ENCODE measurements at regions of chr3 and their contacts with region 1.

Region 1: DNA sequence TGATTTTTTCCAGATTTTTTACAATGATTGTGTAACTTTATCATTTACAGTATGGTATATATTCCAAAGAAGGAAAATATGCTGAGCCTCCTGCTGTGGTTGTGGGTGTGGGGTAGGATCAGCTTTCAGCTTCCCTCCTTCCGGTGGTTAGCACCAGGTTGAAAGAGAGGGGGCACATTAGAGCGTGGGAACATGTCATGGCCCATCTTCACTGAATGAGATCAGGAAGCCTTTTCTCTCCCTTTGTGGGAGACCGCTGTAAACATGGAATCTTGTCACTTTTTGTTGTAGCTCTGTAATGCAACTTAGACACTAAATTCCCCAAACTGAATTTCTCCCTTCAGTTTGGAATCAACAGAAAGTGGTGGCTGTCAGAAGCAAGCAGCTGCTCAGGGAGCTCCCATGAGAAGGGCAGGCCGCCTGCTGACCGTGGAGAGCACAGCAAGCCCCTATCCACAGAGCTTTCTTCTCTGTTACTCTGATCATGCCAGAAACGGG is 86.7 kb upstream of the LIMD1 start:
- DNase-seq: no peak
- ATAC-seq: no peak
- H3K4me3 ChIP-seq: no peak overlapping the region
- H3K27ac ChIP-seq: no peak overlapping the region
- H3K4me1 ChIP-seq: no peaks in the 10 kb centered on the region
- H3K27me3 ChIP-seq: no peaks in the 10 kb centered on the region
- CTCF ChIP-seq: no peak
- EP300 ChIP-seq: no peak
- POLR2A ChIP-seq: no peak
- RAD21 ChIP-seq: no peak

Region 2: GRCh38 chr3:44899683-44900367 is 608.0 kb before region 1 on chr3:
- CTCF ChIA-PET with region 1: no interaction called
- POLR2A ChIA-PET with region 1: no interaction called
- RAD21 ChIA-PET with region 1: no interaction called
- SMC1A ChIA-PET with region 1: no interaction called
- in situ Hi-C with region 1: no loop called
- intact Hi-C with region 1: no loop called
- DNase-seq: no peak
- ATAC-seq: no peak; the same call in 2 of the 3 replicates
- H3K4me3 ChIP-seq: no peak overlapping the region
- H3K27ac ChIP-seq: no peak overlapping the region
- H3K4me1 ChIP-seq: peaks cover 3% of the 10 kb centered on the region; the same call in 1 of the 2 replicates
- H3K27me3 ChIP-seq: no peaks in the 10 kb centered on the region
- CTCF ChIP-seq: no peak
- EP300 ChIP-seq: no peak
- POLR2A ChIP-seq: no peak
- RAD21 ChIP-seq: no peak

Region 3: DNA sequence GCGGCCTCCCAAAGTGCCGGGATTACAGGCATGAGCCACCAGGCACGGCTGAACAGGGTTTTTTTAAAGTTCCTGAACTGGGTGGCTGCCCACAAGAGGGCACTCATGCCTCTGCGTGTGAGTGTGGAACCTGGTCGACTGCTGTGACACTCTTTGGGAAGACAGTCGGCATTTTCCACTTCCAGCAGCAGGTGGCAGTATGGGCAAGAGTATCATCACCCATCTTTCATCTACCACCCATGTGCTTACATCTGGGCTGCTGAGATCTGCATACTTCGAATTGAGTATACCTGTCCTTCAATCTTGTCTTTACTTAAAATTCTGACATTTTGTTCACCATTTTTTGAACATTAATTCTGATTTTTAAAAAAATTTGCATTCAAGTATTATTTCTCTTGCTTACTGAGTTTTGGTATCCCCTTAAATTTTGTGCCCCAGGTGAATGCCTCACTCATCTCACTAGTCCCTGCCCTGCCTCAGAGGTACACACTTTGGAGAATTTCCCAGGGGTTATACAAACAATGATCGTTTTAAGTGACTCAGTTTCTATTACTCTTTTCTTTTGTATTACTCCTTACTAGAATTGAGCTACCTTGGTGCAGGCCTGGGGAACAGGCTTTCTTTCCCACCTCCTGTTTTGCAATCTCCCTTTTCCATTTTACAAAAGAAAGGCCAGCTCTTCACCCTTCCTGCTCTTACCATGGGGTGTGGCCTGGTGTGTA is 470.0 kb before region 1 on chr3:
- CTCF ChIA-PET with region 1: interaction called, 36 read pairs
- POLR2A ChIA-PET with region 1: no interaction called
- RAD21 ChIA-PET with region 1: interaction called, 16 read pairs
- SMC1A ChIA-PET with region 1: interaction called, 17 read pairs
- in situ Hi-C with region 1: loop called (anchors 5 kb)
- intact Hi-C with region 1: no loop called
- DNase-seq: peak; percentile 95
- ATAC-seq: peak; percentile 75
- H3K4me3 ChIP-seq: no peak overlapping the region
- H3K27ac ChIP-seq: no peak overlapping the region
- H3K4me1 ChIP-seq: peaks cover 21% of the 10 kb centered on the region
- H3K27me3 ChIP-seq: no peaks in the 10 kb centered on the region; a peak in 2 of 4 replicates
- CTCF ChIP-seq: peak; percentile 91 to 96 (median 94)
- EP300 ChIP-seq: no peak
- POLR2A ChIP-seq: no peak
- RAD21 ChIP-seq: peak; percentile 86

Region 4: GRCh38 chr3:45546716-45547701 is 39.1 kb after region 1 on chr3:
- CTCF ChIA-PET with region 1: interaction called, 20 read pairs
- POLR2A ChIA-PET with region 1: no interaction called
- RAD21 ChIA-PET with region 1: no interaction called
- SMC1A ChIA-PET with region 1: interaction called, 6 read pairs
- in situ Hi-C with region 1: no loop called
- intact Hi-C with region 1: no loop called
- DNase-seq: no peak
- ATAC-seq: peak; percentile 39; the same call in 2 of the 3 replicates
- H3K4me3 ChIP-seq: no peak overlapping the region
- H3K27ac ChIP-seq: no peak overlapping the region
- H3K4me1 ChIP-seq: peaks cover 6% of the 10 kb centered on the region; the same call in 1 of the 2 replicates
- H3K27me3 ChIP-seq: no peaks in the 10 kb centered on the region
- CTCF ChIP-seq: peak in 2 of 3 experiments; percentile 45 to 48; a peak in 3 of 6 replicates
- EP300 ChIP-seq: no peak
- POLR2A ChIP-seq: no peak
- RAD21 ChIP-seq: 0 out of 2 replicates have a peak, but pooled peaks have one; percentile 17

Region 5: GRCh38 chr3:45665101-45665572 is 157.3 kb after region 1 on chr3:
- CTCF ChIA-PET with region 1: interaction called, 259 read pairs
- POLR2A ChIA-PET with region 1: interaction called, 7 read pairs
- RAD21 ChIA-PET with region 1: interaction called, 30 read pairs
- SMC1A ChIA-PET with region 1: interaction called, 55 read pairs
- in situ Hi-C with region 1: no loop called
- intact Hi-C with region 1: loop called (anchors 1 kb)
- DNase-seq: peak; percentile 25
- ATAC-seq: peak; percentile 67
- H3K4me3 ChIP-seq: no peak overlapping the region
- H3K27ac ChIP-seq: peak overlapping the region; percentile 66
- H3K4me1 ChIP-seq: peaks cover 16% of the 10 kb centered on the region
- H3K27me3 ChIP-seq: no peaks in the 10 kb centered on the region
- CTCF ChIP-seq: peak; percentile 43 to 58 (median 56); a peak in 5 of 6 replicates
- EP300 ChIP-seq: no peak
- POLR2A ChIP-seq: no peak
- RAD21 ChIP-seq: peak; percentile 62

Region 6: GRCh38 chr3:45929042-45929679 is 421.3 kb after region 1 on chr3:
- CTCF ChIA-PET with region 1: interaction called, 6 read pairs
- POLR2A ChIA-PET with region 1: no interaction called
- RAD21 ChIA-PET with region 1: interaction called, 6 read pairs
- SMC1A ChIA-PET with region 1: interaction called, 4 read pairs
- in situ Hi-C with region 1: loop called (anchors 5 kb)
- intact Hi-C with region 1: loop called (anchors 1 kb)
- DNase-seq: no peak
- ATAC-seq: peak; percentile 100
- H3K4me3 ChIP-seq: no peak overlapping the region
- H3K27ac ChIP-seq: no peak overlapping the region
- H3K4me1 ChIP-seq: no peaks in the 10 kb centered on the region; the same call in 1 of the 2 replicates
- H3K27me3 ChIP-seq: no peaks in the 10 kb centered on the region
- CTCF ChIP-seq: peak; percentile 94 to 98 (median 97); a peak in 5 of 6 replicates
- EP300 ChIP-seq: no peak
- POLR2A ChIP-seq: no peak
- RAD21 ChIP-seq: peak; percentile 99

Measured in GM12878 (cell line).